IMR-90 (cell line): ENCODE measurements at regions of chr4 and their contacts with region 1.

Region 1: GRCh38 chr4:143455211-143455610 is 58.3 kb upstream of the SMARCA5 start:
- DNase-seq: no peak
- ATAC-seq: no peak
- H3K4me3 ChIP-seq: no peak overlapping the region
- H3K27ac ChIP-seq: no peak overlapping the region
- H3K4me1 ChIP-seq: no peaks in the 10 kb centered on the region
- H3K27me3 ChIP-seq: no peaks in the 10 kb centered on the region
- CTCF ChIP-seq: no peak
- POLR2A ChIP-seq: no peak
- RAD21 ChIP-seq: no peak

Region 2: DNA sequence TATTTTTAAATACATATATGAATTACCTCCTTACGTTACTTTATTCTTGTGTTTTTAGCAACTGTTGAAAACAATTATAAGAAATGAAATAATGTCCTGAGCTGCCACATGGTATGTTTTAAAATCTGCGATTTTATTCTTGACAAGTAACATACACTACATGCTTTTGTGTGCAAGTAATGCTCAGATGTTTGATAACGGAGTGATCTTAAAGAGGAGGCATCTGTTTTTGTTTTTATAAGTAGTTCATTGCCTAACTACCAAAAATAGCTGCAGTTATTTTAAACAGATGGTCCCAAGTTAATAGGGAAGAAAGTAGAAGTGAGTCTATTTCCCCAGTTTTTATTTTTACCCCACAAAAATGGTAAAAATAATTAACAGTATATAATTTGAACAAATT is 63.3 kb before region 1 on chr4:
- CTCF ChIA-PET with region 1: no interaction called
- POLR2A ChIA-PET with region 1: interaction called, 22 read pairs
- dilution Hi-C with region 1: no loop called
- in situ Hi-C with region 1: no loop called
- intact Hi-C with region 1: no loop called
- DNase-seq: peak; percentile 89
- ATAC-seq: peak; percentile 65
- H3K4me3 ChIP-seq: no peak overlapping the region
- H3K27ac ChIP-seq: peak overlapping the region; percentile 28; the same call in 1 of the 2 replicates
- H3K4me1 ChIP-seq: peaks cover 25% of the 10 kb centered on the region
- H3K27me3 ChIP-seq: no peaks in the 10 kb centered on the region
- CTCF ChIP-seq: no peak
- POLR2A ChIP-seq: no peak
- RAD21 ChIP-seq: no peak